AG04449 (cell line): ENCODE measurements at regions of chr7 and their contacts with region 1.

Region 1: DNA sequence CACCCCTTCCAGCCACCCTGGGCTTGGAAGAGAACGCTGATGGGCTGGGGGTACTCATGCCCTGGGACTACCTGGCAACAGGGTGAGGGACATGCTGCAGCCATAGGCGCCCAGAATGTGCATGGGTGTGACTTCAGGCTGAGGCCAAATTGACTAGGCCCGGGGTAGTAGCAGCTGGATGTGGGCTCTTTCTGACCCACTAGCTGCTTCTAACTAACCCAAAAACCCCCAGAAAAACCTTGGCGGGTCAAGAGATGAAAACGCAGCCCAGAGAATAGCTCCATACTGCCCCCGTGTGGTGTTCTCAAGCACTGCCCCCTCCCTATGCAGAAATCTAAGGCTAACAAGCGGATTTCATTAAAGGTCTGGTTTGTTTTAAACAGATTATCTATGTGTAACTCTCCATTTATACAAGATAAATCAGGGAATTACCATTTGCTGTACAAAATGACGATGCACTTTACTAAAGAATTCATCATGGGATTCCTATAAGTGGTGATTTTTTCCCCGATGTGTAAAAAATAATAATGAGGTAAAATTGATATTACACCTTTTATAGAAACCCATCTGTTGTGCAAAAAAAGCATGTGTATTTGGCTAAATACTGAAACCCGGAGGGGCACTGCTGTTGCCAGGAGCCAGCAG is 4.2 kb downstream of the SMARCD3 start:
- DNase-seq: no peak
- H3K4me3 ChIP-seq: peak overlapping the region; percentile 43; the same call in 1 of the 2 replicates
- CTCF ChIP-seq: peak; percentile 76

Region 2: GRCh38 chr7:150895809-150896208 is 348.5 kb before region 1 on chr7:
- CTCF ChIA-PET with region 1: no interaction called
- POLR2A ChIA-PET with region 1: no interaction called
- DNase-seq: no peak
- H3K4me3 ChIP-seq: no peak overlapping the region
- CTCF ChIP-seq: no peak

Region 3: GRCh38 chr7:151017953-151018420 is 226.3 kb before region 1 on chr7:
- CTCF ChIA-PET with region 1: no interaction called
- POLR2A ChIA-PET with region 1: no interaction called
- DNase-seq: no peak
- H3K4me3 ChIP-seq: peak overlapping the region; percentile 47
- CTCF ChIP-seq: peak; percentile 100

Region 4: DNA sequence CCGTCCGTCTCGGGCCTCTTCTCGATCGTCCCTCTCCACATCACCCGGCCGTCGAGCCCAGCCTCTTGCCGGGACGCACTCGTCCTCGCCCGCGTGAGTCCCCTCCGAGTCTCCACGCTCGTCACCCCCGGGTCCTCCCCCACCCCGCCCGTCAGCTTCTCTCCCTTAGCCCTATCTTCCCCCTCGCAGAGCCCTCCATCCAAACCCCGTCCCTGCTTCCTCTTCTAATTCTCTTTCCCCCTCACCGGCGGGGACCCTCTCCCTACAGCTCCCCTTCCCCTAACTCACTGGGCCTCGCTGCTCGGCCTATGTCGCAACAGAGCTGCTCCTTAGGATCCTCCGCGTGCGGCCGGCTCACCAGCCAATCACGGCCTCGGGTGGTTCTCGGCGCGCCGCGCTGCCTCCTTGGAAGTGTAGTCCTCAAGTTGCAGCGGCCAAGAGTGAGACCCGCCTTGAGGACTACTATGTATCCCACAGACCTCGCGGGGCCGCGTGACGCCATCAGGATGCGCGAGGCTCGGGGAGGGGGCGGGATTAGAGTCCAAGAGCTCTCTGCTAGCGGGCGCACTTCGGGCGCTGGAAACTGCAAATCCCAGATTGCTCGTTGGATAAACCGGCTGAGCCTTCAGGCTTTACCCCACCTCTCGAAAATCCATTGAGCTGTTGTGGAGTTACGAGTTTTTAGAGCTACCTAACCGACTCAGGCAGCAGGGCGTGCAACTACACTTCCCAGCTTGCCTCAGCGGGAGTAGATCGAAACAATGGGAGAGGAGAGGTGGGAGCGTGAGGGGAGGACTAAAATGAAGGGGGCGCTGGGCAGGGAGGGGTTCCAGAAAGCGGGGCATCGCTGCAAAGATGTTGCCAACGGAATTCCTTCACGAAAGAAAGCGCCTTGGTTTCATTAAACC is 17.2 kb before region 1 on chr7 and contains the start of gene ABCF2:
- CTCF ChIA-PET with region 1: interaction called, 130 read pairs
- POLR2A ChIA-PET with region 1: interaction called, 12 read pairs
- DNase-seq: peak; percentile 97
- H3K4me3 ChIP-seq: peak within 1 kb of the TSS; percentile 89
- CTCF ChIP-seq: no peak

Region 5: DNA sequence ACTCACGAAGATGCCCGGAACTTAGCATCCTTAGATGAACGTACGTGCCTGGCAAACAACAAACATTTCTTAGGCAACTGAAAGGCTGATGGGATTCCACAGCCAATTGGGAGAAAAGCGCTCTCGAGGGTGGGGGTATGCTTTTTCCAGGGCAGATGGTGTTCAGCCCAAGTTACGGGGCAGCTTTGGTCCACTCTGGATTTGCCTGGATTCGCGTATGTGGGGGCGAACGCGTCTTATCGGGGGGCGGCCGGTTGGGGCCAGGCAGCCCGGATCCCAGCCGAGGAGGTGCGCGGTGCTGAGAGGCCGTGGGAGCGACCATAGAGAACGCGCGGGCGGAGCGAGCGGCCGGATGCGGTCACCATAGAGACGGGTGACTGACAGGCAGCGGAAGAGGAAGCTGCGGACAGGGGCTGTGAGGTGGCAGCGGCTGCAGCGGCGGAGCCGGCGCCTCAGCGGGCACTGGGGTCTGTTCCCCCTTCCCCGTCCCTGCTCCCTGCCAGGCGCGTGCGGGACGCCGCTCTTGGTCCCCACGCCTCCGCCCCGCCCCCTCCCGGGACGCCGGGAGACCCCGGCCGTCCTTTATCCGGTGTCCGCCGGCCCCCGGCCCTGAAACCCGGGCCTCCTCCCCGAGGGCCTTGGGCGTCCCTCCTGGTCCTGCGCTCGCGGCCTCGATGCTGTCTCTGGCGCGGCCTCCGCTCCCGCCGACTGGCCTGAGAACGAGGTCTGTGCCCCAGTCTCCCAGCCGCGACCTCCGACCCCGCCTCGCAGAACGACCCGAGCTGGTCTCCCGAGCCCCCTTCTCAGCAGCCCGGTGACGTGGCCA is 12.0 kb before region 1 on chr7 and contains the start of gene CHPF2:
- CTCF ChIA-PET with region 1: interaction called, 130 read pairs
- POLR2A ChIA-PET with region 1: interaction called, 12 read pairs
- DNase-seq: no peak
- H3K4me3 ChIP-seq: peak within 1 kb of the TSS; percentile 98
- CTCF ChIP-seq: no peak

Region 6: DNA sequence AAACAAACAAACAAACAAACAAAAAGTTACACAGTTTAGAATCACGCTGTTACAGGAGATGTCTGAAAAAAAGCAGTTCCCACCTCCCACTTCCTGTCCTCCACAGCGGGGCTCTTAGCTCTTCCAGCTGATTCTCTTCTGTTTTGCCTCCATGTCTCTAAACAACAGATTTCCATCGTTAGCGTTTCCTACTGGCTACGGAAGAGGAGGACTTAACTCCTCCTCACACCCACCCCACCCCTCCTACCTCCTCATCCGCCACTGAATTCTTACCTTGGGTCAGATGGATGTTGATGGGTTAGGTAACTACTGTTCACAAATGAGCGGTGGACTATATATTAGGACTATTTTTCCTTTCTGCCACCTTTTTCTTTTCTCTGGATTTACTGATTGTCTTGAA is 60.5 kb after region 1 on chr7:
- CTCF ChIA-PET with region 1: interaction called, 33 read pairs
- POLR2A ChIA-PET with region 1: no interaction called
- DNase-seq: no peak
- H3K4me3 ChIP-seq: peak overlapping the region; percentile 29; the same call in 1 of the 2 replicates
- CTCF ChIP-seq: no peak